K562 (cell line): ENCODE measurements at regions of chr6 and their contacts with region 1.

Region 1: DNA sequence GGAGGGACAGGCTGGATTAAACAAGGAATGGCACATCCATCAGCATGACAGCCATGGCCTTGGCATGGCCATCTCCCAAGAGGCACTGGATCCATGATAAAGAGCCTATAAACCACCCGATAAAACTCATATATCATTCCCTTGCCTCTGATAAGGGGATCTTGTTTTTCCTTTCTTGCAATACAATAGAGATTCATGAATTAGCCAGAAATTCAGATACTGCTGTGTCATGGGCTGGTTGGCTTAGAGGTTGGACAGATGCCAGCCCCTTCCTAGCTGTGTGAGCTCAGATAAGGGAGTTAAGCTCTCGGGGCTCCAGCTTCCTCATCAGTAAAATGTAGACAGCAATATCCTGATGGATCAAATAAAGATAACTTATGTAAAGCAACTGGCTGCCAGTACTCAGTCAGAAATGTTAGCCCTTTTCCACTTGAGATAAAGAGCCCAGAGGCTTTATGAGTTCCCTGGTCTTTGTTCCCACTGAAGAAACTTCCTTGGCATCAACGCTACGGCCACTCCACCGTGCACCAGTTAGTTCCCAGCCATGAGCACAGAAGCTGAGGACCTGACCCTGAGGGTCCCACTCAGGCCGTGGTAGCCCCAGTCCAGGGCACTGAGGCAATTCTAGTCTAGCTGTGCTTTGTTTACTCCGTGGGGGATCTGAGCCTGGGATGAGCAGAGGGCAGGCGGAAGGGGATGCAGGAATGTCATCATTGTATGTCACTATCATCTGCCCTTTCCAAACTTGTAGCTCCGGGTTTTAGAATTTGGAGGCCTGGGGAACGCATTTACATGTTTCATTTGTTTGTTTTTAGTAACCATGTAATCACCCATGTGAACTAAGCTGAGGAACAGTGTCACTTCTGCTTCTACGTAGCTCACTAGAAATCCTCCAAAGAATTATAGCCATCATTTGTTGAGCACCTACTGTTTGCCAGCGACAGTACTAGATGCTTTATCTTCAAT is 67.2 kb upstream of the TBC1D7 start:
- DNase-seq: peak; percentile 75 to 98 (median 82)
- ATAC-seq: peak; percentile 95
- H3K4me3 ChIP-seq: no peak overlapping the region
- H3K27ac ChIP-seq: peak overlapping the region; percentile 65; the same call in 2 of the 3 replicates
- H3K4me1 ChIP-seq: peaks cover 13 to 24% of the 10 kb centered on the region in 2 experiments
- H3K27me3 ChIP-seq: peaks cover 0 to 6% of the 10 kb centered on the region in 2 experiments; a peak in 1 of 5 replicates
- CTCF ChIP-seq: no peak
- EP300 ChIP-seq: peak; percentile 94
- POLR2A ChIP-seq: no peak
- RAD21 ChIP-seq: no peak; a peak in 2 of 4 replicates

Region 2: DNA sequence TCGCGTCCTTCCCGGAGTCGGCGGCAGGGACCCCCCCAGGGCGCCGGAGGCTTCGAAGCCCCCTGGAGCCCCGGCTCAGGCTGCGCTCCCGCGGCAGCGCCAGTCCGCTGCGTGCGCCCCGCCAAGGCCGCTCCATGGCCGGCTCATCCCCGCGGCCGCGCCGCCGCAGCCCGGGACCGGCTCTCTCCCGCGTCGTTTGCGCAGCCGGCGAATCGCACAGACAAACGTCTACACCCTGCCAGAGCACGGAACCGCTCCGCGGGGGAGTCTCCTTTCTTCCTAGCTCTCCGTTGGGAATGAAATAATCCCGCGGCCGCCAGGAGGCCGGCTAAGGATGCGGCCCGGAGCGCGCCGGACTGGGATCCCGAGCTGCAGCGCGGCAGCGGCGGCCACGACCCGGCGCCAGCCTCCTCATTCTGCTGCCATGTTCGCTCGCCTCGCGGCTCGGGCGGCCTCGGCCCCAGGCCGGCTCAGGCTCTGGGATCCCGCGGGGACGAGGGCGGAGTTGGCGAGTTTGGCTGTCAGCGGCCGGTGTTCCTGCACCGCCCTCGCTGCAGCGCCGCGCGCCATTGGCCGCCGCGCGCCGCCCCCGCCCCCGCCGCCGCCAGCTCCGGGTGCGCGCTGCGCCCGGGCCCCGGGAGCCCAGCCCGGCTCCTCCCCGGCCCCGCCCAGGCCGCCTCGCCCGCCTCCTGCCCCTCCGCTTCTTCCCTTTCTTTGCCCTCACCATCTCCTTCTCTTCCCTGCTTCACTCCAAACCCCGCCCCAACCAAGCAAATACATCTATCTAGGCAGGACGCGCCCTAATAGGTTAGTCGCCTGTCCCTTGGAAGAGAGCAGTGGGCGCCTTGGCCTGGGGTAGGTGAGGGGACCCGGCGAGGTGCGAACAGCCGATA is 91.8 kb after region 1 on chr6 and contains the start of gene GFOD1:
- CTCF ChIA-PET with region 1: no interaction called
- POLR2A ChIA-PET with region 1: no interaction called
- in situ Hi-C with region 1: no loop called
- intact Hi-C with region 1: loop called (anchors 5 kb)
- DNase-seq: peak; percentile 91 to 98 (median 97)
- ATAC-seq: peak; percentile 86
- H3K4me3 ChIP-seq: peak within 1 kb of the TSS; percentile 62
- H3K27ac ChIP-seq: peak within 1 kb of the TSS; percentile 68; the same call in 2 of the 3 replicates
- H3K4me1 ChIP-seq: peaks cover 21 to 31% of the 10 kb centered on the region in 2 experiments
- H3K27me3 ChIP-seq: no peaks in the 10 kb centered on the region; a peak in 1 of 5 replicates
- CTCF ChIP-seq: no peak
- EP300 ChIP-seq: no peak
- POLR2A ChIP-seq: peak; percentile 75
- RAD21 ChIP-seq: no peak; a peak in 1 of 4 replicates
- polyA plus RNA-seq, gene GFOD1: 5.4 to 5.9 TPM

Region 3: DNA sequence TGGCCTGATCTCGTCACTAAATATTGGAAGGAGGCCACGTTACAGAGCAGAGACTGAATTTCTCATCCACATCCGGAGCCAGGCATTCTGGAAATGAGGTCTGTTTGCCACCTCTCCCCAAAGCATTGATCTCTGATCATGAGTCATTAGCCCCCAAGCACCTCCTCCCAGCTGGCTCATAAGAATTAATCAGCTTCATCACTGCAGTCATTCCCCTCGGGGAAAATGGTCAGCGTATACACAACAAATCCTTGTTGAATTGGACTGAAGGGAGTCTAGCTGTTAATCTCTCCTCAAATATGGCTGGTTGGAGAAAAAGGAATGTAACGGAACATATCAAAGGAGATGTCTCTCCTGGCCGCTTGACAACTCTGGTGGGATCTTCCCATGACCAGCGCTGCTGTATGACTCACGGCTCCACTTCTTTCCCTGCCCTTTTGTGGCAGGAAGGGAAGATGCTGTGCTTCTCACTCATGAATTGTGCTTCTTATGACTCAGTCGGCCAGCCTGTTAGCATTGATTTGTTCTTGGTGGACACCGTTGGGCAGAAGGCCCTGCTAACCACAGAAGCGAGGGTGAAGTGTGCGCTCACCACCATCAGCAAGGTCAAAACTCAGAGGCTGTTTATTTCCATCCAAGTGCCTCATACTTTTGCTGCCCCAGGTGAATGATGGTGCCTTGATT is 605.9 kb after region 1 on chr6:
- CTCF ChIA-PET with region 1: no interaction called
- POLR2A ChIA-PET with region 1: no interaction called
- in situ Hi-C with region 1: no loop called
- intact Hi-C with region 1: no loop called
- DNase-seq: no peak
- ATAC-seq: no peak
- H3K4me3 ChIP-seq: no peak overlapping the region
- H3K27ac ChIP-seq: no peak overlapping the region
- H3K4me1 ChIP-seq: no peaks in the 10 kb centered on the region
- H3K27me3 ChIP-seq: no peaks in the 10 kb centered on the region
- CTCF ChIP-seq: no peak
- EP300 ChIP-seq: no peak
- POLR2A ChIP-seq: no peak
- RAD21 ChIP-seq: no peak